HepG2 (cell line): ENCODE measurements at regions of chr12 and their contacts with region 1.

Region 1: DNA sequence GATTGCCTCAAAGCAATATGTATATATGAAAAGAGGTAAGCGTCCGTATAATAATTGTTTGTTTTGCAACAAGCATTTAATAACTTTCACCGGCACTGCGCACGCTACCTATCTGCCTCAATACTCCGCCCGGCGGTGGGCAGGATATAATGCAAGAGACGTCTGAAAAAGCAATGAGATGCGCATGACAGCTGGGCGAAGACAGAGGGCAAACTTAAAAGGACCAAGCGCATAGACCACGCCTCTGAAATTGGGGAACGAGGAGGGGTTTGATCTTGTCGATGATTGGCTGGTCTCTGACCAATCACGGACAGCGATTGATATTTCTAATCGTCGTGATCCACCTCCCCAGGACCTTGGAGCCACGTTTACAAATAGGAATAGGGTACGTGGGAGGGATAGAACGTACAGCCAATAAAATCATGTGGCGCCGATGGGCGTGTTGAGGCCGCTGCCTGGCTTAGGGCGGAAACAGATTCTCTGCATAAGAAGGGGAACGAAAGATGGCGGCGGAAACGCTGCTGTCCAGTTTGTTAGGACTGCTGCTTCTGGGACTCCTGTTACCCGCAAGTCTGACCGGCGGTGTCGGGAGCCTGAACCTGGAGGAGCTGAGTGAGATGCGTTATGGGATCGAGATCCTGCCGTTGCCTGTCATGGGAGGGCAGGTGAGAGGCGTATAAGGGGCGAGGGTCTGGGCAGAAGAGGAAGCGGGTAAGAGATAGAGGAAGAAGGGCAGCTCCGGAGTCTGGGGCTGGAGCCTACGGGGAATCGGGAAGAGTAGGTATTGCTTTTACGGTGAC is at the start of gene OS9:
- DNase-seq: peak; percentile 100
- ATAC-seq: peak; percentile 99
- H3K4me3 ChIP-seq: peak within 1 kb of the TSS; percentile 86 to 90 (median 86)
- H3K27ac ChIP-seq: peak within 1 kb of the TSS; percentile 69
- H3K4me1 ChIP-seq: peaks cover 48% of the 10 kb centered on the region
- H3K27me3 ChIP-seq: no peaks in the 10 kb centered on the region
- CTCF ChIP-seq: peak; percentile 76
- EP300 ChIP-seq: 0 out of 4 replicates have a peak, but pooled peaks of 1 of the 2 experiments have one; percentile 10
- POLR2A ChIP-seq: peak; percentile 94 to 96
- RAD21 ChIP-seq: peak; percentile 28; the same call in 1 of the 2 replicates
- total RNA-seq, gene OS9: 51.7 and 156 TPM in 2 replicates

Region 2: GRCh38 chr12:57632694-57633477 is 61.0 kb before region 1 on chr12 and contains the start of gene B4GALNT1:
- CTCF ChIA-PET with region 1: interaction called, 6 read pairs
- POLR2A ChIA-PET with region 1: no interaction called
- in situ Hi-C with region 1: no loop called
- intact Hi-C with region 1: loop called (anchors 2 kb)
- DNase-seq: no peak
- ATAC-seq: peak; percentile 91
- H3K4me3 ChIP-seq: peak within 1 kb of the TSS; percentile 66 to 77 (median 68)
- H3K27ac ChIP-seq: no peak within 1 kb of the TSS
- H3K4me1 ChIP-seq: peaks cover 22% of the 10 kb centered on the region
- H3K27me3 ChIP-seq: no peaks in the 10 kb centered on the region; a peak in 1 of 5 replicates
- CTCF ChIP-seq: peak; percentile 88
- EP300 ChIP-seq: no peak; a peak in 1 of 4 replicates
- POLR2A ChIP-seq: no peak
- RAD21 ChIP-seq: peak; percentile 92
- total RNA-seq, gene B4GALNT1: 1.9 and 4.5 TPM in 2 replicates

Region 3: GRCh38 chr12:57735952-57736740 is 42.3 kb after region 1 on chr12:
- CTCF ChIA-PET with region 1: no interaction called
- POLR2A ChIA-PET with region 1: no interaction called
- in situ Hi-C with region 1: no loop called
- intact Hi-C with region 1: loop called (anchors 5 kb)
- DNase-seq: peak; percentile 37
- ATAC-seq: peak; percentile 78
- H3K4me3 ChIP-seq: peak overlapping the region; percentile 48 to 73 (median 49)
- H3K27ac ChIP-seq: no peak overlapping the region
- H3K4me1 ChIP-seq: peaks cover 42% of the 10 kb centered on the region
- H3K27me3 ChIP-seq: peaks cover 12 to 64% of the 10 kb centered on the region in 2 experiments; a peak in 4 of 5 replicates
- CTCF ChIP-seq: peak; percentile 71
- EP300 ChIP-seq: no peak
- POLR2A ChIP-seq: no peak
- RAD21 ChIP-seq: peak; percentile 62; the same call in 1 of the 2 replicates